ENCODE measurements at regions of chr7 and their contacts with region 1.

Region 1: DNA sequence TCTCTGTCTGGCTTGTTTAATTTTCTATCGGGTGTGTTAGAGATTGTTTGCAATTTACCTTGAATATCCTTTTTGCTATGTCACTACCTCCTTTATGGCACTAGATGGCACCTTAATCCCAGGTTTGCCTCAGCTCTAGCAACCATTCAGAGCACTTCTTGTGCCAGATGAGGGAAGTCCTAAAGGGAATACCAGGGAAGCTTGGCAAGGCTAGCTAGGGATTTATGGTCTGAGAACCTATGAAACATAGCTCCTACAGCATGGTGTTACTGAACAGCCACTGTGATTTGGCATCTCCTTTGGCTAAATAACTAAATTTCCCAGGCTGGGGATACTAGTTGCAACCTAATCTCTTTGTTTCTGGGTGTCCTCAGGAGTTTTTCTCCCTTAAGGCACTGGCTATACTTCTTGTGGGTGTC is 69.0 kb upstream of the VOPP1 start:
- DNase-seq: peak; percentile 50
- H3K4me3 ChIP-seq: no peak overlapping the region
- H3K27me3 ChIP-seq: no peaks in the 10 kb centered on the region
- CTCF ChIP-seq: peak; percentile 68

Region 2: DNA sequence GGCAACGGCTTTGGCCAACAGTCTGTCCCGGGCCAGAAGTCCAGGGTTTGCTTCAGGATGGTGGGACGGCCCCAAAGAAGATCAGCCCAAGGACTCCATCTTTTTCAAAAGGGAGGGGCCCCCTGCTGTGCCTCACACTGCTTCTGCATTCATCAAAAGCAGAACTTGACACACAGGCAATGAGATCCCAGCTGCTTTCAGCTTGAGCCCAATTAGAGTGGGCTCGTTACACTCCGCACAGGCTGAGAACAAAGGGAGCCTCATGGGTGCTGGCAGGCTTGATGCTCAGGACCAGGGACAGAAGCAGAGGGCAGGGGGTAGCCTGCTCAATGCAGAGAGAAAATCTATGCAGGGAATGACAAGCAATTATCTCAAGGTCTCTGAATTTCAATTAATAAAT is 114.5 kb before region 1 on chr7:
- CTCF ChIA-PET with region 1: no interaction called
- POLR2A ChIA-PET with region 1: no interaction called
- DNase-seq: no peak
- H3K4me3 ChIP-seq: no peak overlapping the region
- H3K27me3 ChIP-seq: no peaks in the 10 kb centered on the region
- CTCF ChIP-seq: no peak

Region 3: DNA sequence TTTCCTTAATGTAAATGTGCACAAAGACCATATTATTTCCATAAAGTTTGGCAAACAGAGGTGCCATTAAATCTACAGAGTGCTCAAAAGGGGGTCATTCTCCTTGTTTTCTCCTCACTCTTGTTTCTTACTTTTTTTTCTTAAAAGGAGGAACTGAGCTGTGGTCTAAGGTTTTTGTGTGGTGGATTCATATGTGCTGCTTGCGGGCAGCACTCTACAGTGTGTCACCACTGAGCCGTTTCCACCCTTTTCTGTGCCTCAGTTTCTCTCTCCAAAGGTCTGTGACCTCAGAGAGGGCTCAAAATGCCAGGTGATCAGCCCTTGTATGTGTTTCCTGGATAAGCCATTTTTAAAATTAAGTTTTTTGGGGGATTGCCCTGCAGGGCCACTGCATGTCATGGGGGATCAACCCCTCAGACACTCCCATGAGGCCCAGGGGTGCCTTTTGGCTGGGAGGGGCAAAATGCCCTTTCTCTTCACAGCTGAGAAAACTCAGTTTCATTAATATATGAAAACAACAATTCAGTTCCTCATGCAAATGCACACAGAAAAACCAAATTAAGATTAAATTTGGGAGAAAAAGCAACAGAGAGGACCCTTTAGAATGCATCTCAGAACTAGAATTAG is 12.1 kb before region 1 on chr7:
- CTCF ChIA-PET with region 1: interaction called, 11 read pairs
- POLR2A ChIA-PET with region 1: no interaction called
- DNase-seq: no peak
- H3K4me3 ChIP-seq: no peak overlapping the region
- H3K27me3 ChIP-seq: no peaks in the 10 kb centered on the region
- CTCF ChIP-seq: no peak

Region 4: DNA sequence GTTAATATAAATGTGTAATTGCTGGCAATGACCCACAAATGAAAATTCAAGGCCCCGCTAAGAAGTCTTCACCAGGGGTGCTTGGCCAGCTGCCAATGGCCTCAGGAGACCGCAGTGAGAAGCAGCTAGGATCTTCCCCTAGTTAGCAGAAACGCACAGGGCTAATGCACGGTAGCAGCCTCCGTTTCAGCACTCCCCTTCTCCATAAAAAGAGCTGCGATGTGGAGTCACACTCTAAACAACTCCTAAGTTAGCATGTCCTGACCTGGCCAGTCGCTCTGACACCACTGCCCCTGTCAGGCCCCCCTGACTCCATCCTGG is 82.3 kb after region 1 on chr7:
- CTCF ChIA-PET with region 1: interaction called, 10 read pairs
- POLR2A ChIA-PET with region 1: no interaction called
- DNase-seq: no peak
- H3K4me3 ChIP-seq: no peak overlapping the region
- H3K27me3 ChIP-seq: no peaks in the 10 kb centered on the region
- CTCF ChIP-seq: no peak

Region 5: GRCh38 chr7:55964261-55965099 is 323.2 kb after region 1 on chr7 and contains the start of gene NIPSNAP2:
- CTCF ChIA-PET with region 1: interaction called, 26 read pairs
- POLR2A ChIA-PET with region 1: no interaction called
- DNase-seq: no peak
- H3K4me3 ChIP-seq: peak within 1 kb of the TSS; percentile 44
- H3K27me3 ChIP-seq: no peaks in the 10 kb centered on the region
- CTCF ChIP-seq: 0 out of 2 replicates have a peak, but pooled peaks have one; percentile 4
- polyA plus RNA-seq, gene NIPSNAP2: 31.1 and 53.6 TPM in 2 replicates